ENCODE measurements at regions of chr14 and their contacts with region 1.

Region 1: DNA sequence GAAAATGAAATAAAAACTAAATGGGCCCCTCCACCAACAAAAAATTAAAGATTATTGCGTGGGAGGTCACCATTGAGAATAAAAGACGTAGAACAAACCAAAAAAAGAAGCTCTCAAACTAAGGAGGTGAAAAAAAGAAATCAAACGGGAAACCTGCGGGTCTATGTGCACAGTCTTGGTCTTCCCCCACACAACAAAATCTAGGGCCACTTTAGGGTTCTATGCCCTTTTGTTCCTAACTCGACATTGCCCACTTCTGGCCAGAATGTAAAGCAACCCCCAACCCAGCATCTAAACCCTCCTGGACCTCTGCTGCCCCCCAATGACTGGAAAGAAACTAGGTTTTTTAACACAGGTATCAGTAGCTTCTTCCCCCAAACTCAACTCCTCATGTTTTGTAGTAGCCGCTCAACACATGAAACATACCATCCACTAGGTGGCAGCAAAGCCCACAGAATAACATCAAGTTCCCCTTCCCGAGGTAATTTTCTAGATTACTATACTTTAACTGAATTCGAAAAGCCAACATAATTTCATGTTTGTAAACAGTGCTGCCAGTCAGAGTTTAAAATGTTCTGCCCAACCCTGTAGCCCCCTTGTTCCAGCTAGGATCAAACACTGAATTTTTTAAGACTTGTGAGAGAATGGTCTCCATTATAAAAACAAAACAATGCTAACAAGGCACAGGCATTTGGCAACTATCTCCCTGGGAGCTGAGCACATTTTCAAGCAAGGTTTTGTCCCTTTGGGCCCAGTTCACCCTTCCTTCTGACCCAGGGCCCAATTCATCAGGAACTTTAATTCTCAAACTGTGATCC is 18.7 kb downstream of the DAD1 start:
- DNase-seq: peak; percentile 86
- H3K4me3 Mint-ChIP-seq: peak overlapping the region; percentile 85
- H3K27ac Mint-ChIP-seq: peak overlapping the region; percentile 90
- H3K4me1 Mint-ChIP-seq: peaks cover 71% of the 10 kb centered on the region
- H3K27me3 Mint-ChIP-seq: no peaks in the 10 kb centered on the region

Region 2: DNA sequence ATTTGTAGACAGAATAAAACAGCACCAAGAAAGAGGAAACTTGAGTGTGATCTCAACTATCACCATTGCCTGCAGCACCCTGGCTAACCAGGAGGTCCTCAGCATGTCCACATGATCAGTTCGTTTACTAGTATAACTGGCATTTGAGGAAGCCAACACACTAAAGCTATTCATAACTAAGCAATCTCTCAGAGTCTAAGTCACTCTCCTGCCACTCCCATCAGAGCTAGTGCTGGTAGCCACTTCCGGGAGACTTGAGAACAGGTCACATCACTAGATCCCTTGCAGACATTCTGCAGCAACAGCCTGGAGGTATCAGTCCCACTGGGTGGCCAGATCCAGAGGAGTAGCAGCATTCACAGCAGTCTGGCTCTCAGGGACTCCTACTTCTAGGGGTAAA is 543.8 kb before region 1 on chr14:
- intact Hi-C with region 1: no loop called
- DNase-seq: no peak
- H3K4me3 Mint-ChIP-seq: no peak overlapping the region
- H3K27ac Mint-ChIP-seq: peak overlapping the region; percentile 48
- H3K4me1 Mint-ChIP-seq: peaks cover 5% of the 10 kb centered on the region
- H3K27me3 Mint-ChIP-seq: no peaks in the 10 kb centered on the region

Region 3: DNA sequence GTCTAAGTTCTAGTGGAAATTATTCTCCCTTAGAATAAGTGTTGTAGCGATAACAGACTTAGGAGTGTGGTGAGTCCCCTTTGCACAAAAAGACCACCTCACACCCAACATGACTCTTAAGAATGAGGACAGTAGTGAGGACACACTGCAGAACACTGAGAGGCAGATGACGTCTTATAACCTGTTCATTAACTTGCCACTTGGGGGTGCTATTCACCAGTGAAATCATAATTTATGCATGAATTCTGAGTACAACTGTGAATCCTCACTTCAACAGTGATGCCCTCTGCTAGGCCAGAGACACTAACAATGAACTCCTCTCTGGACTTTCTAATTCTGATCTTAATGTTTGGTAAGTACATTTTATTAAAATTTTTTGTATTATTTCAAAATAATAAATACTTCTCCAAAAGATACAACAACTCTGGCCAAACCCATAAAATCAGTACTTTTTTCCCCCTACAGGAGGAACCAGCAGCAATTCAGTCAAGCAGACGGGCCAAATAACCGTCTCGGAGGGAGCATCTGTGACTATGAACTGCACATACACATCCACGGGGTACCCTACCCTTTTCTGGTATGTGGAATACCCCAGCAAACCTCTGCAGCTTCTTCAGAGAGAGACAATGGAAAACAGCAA is 256.0 kb before region 1 on chr14:
- intact Hi-C with region 1: no loop called
- DNase-seq: no peak
- H3K4me3 Mint-ChIP-seq: peak overlapping the region; percentile 69
- H3K27ac Mint-ChIP-seq: peak overlapping the region; percentile 72
- H3K4me1 Mint-ChIP-seq: no peaks in the 10 kb centered on the region
- H3K27me3 Mint-ChIP-seq: no peaks in the 10 kb centered on the region

Region 4: GRCh38 chr14:22598099-22598899 is 28.0 kb after region 1 on chr14 and contains the start of gene ABHD4:
- intact Hi-C with region 1: loop called (anchors 1 kb)
- DNase-seq: peak; percentile 72
- H3K4me3 Mint-ChIP-seq: peak within 1 kb of the TSS; percentile 97
- H3K27ac Mint-ChIP-seq: peak within 1 kb of the TSS; percentile 84
- H3K4me1 Mint-ChIP-seq: peaks cover 39% of the 10 kb centered on the region
- H3K27me3 Mint-ChIP-seq: no peaks in the 10 kb centered on the region
- total RNA-seq, gene ABHD4: 13.2 and 13.6 TPM in 2 replicates

Region 5: GRCh38 chr14:22766456-22767322 is 196.3 kb after region 1 on chr14 and contains the start of gene OXA1L:
- intact Hi-C with region 1: loop called (anchors 1 kb)
- DNase-seq: peak; percentile 94
- H3K4me3 Mint-ChIP-seq: peak within 1 kb of the TSS; percentile 94
- H3K27ac Mint-ChIP-seq: peak within 1 kb of the TSS; percentile 96
- H3K4me1 Mint-ChIP-seq: peaks cover 22% of the 10 kb centered on the region
- H3K27me3 Mint-ChIP-seq: no peaks in the 10 kb centered on the region
- total RNA-seq, gene OXA1L: 125 and 127 TPM in 2 replicates

Region 6: DNA sequence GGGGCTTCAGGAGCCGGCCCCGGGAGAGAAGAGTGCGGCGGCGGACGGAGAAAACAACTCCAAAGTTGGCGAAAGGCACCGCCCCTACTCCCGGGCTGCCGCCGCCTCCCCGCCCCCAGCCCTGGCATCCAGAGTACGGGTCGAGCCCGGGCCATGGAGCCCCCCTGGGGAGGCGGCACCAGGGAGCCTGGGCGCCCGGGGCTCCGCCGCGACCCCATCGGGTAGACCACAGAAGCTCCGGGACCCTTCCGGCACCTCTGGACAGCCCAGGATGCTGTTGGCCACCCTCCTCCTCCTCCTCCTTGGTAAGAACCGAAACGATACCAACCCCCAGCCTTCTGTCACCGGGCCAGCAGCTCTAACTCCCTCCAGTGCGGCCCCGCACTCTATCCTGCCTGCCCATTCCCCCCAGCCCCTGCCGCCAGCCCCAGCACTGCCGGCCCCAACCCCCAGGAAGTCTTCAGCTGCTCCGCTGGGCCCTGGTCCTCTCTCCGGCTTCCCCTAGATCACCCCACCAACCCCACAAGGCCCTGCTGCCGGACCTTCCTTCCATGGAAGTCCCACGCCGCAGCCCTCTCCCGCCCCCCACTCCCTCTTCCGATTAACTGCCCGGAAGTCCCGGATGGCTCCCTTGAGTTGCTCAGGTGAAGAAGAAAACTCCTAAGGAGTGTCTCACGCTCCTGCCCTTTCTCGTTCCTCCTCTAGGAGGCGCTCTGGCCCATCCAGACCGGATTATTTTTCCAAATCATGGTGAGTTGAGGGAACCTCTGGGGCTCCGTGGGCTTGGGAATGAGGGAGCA is 301.9 kb after region 1 on chr14:
- intact Hi-C with region 1: loop called (anchors 1 kb)
- DNase-seq: peak; percentile 63
- H3K4me3 Mint-ChIP-seq: peak overlapping the region; percentile 91
- H3K27ac Mint-ChIP-seq: peak overlapping the region; percentile 80
- H3K4me1 Mint-ChIP-seq: peaks cover 22% of the 10 kb centered on the region
- H3K27me3 Mint-ChIP-seq: no peaks in the 10 kb centered on the region

Region 7: DNA sequence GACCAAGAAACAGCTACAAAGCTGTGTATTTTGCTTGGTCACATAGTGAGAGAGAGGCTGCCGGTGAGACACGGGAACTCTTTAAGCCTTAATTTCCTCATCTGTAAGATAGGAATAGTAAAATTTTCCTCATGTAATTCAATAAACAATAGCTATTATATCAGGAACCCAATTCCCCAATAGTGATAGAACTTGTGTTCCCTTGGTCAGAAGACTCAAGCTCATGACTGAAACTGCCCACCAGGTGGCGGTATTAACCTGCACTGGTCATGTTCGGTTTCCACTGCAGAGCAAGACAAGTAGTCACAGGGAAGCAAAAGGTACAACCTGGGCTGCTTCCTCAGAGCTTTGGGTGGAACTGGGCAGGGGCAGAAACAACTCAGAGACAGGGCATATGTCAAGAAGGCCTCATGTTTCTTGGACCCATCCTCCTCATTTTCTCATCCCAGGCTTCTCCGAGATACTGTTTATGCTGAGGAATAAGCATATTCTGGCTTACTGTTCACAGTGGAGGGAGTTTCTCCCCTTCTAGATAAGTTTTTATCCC is 416.2 kb after region 1 on chr14:
- intact Hi-C with region 1: loop called (anchors 1 kb)
- DNase-seq: peak; percentile 79
- H3K4me3 Mint-ChIP-seq: no peak overlapping the region
- H3K27ac Mint-ChIP-seq: no peak overlapping the region
- H3K4me1 Mint-ChIP-seq: no peaks in the 10 kb centered on the region
- H3K27me3 Mint-ChIP-seq: peaks cover 3% of the 10 kb centered on the region

Measured in activated T-helper 1 cell treated with anti-CD3 and anti-CD28 coated beads, Interleukin-12 subunit alpha, Interleukin-12 subunit beta, Interleukin-2, Interleukin-4 antibody, amounts not matched to agents 30 ng/mL and 10 ng/mL and 1 ng/mL, durations not matched to agents 14 hours and 24 hours and 36 hours (primary cell).